GM10248 (cell line): ENCODE measurements at regions of chr17 and their contacts with region 1.

Region 1: GRCh38 chr17:10618202-10618635 is 38.9 kb downstream of the MYH3 start:
- DNase-seq: peak; percentile 80
- CTCF ChIP-seq: peak; percentile 96

Region 2: DNA sequence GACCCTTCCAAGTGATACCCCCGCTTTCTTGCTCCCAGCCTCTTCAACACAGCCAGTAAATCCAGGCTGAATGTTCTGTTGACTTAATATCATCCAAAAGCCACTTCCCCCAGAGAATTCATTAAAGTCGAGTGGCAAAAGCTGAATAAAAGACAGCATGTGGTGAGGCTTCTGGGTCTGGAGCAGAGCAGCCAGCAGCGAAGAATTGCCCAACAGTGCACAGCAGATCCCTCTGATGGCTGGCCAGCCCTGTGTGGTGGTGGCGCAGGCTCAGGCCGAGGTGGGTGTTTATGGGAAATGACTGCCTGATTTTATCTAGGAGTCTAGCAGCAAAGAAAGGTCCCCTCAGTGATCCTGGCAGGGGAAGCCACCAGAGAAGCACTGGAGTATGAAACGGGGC is 682.8 kb before region 1 on chr17:
- CTCF ChIA-PET with region 1: interaction called, 10 read pairs
- POLR2A ChIA-PET with region 1: no interaction called
- DNase-seq: no peak
- CTCF ChIP-seq: no peak

Region 3: DNA sequence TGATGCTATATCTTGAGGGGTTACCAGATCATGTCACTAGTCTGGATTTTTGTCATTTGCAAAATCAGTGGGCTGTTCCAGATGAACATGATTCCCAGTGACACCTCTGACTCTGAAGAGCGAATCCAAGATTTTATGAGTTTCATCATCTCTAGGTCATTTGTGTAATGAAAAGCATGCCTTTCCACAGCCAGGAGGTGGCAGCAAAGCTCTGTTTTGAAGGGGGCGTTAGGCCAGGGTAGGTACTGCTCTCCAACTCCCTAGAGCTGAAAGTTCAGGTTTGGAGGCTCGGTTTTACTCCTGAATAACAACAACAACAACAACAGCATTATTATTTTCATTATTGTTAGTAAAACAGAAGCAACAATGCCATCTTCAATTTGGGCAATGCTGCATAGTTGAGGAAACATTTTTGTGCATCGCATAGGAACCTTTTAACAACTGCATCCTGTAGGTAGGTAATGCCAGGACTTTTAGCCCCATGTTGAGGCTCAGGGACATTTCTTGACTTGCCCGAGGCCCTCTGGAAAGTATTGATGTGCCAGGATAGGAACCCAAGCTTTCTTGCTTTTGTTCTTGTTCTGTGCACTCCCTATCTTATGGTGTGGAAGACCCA is 322.4 kb before region 1 on chr17:
- CTCF ChIA-PET with region 1: interaction called, 104 read pairs
- POLR2A ChIA-PET with region 1: no interaction called
- DNase-seq: peak; percentile 62
- CTCF ChIP-seq: peak; percentile 82

Region 4: GRCh38 chr17:10471853-10472252 is 146.4 kb before region 1 on chr17:
- CTCF ChIA-PET with region 1: no interaction called
- POLR2A ChIA-PET with region 1: no interaction called
- DNase-seq: no peak
- CTCF ChIP-seq: no peak

Region 5: GRCh38 chr17:10579270-10579669 is 38.9 kb before region 1 on chr17:
- CTCF ChIA-PET with region 1: interaction called, 12 read pairs
- POLR2A ChIA-PET with region 1: no interaction called
- DNase-seq: no peak
- CTCF ChIP-seq: no peak

Region 6: GRCh38 chr17:10631048-10631700 is 13.0 kb after region 1 on chr17:
- CTCF ChIA-PET with region 1: interaction called, 206 read pairs
- POLR2A ChIA-PET with region 1: no interaction called
- DNase-seq: peak; percentile 53
- CTCF ChIP-seq: peak; percentile 83

Region 7: GRCh38 chr17:10844621-10845387 is 226.6 kb after region 1 on chr17:
- CTCF ChIA-PET with region 1: interaction called, 10 read pairs
- POLR2A ChIA-PET with region 1: no interaction called
- DNase-seq: peak; percentile 86
- CTCF ChIP-seq: peak; percentile 91